Sciatic nerve (tissue), 2 donors: ENCODE measurements at regions of chr15 and their contacts with region 1.

Region 1: DNA sequence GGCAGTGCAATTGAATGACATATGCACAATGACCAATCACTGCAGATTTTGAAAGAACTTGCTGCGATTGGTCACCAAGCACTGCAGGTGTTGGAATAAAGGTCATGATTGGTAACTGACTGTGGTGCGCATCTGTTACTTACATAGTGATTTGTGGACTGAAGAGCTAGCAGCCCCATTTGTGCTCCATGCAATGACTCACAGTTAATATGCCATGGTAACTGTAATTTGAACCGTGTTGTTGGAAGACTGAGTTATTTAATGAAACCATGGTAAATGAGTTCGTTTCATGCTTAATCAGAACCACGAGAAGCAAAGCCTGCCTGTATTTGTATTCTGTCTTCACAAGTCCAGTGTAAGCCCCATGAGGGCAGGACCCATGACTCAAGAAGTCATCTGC is 220.5 kb downstream of the TJP1 start:
- DNase-seq: no peak
- ATAC-seq: no peak

Region 2: DNA sequence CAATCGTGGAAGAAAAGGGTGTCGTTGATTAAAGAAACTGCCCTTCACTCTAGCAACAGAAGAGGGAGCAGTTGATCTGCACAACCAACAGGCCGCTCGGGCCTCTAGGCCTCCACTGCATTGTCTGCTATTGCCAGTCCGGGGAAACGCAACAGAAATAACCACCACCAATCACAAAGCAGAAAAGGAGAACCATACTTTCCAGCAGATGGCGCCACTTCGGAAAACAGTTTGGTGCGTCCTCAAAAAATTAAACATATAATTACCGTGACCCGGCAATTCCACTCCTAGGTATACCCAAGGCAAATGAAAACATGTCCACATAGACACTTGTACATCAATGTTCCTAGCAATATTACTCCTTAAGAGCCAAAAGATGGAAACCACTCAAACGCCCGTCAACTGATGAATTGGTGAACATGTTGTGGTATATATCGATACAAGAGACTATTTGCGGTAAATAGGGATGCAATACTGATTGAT is 66.3 kb after region 1 on chr15:
- intact Hi-C with region 1: loop called (anchors 10 kb)
- DNase-seq: no peak
- ATAC-seq: peak; percentile 66